Gastrocnemius medialis (tissue), 4 donors: ENCODE measurements at regions of chr19 and their contacts with region 1.

Region 1: DNA sequence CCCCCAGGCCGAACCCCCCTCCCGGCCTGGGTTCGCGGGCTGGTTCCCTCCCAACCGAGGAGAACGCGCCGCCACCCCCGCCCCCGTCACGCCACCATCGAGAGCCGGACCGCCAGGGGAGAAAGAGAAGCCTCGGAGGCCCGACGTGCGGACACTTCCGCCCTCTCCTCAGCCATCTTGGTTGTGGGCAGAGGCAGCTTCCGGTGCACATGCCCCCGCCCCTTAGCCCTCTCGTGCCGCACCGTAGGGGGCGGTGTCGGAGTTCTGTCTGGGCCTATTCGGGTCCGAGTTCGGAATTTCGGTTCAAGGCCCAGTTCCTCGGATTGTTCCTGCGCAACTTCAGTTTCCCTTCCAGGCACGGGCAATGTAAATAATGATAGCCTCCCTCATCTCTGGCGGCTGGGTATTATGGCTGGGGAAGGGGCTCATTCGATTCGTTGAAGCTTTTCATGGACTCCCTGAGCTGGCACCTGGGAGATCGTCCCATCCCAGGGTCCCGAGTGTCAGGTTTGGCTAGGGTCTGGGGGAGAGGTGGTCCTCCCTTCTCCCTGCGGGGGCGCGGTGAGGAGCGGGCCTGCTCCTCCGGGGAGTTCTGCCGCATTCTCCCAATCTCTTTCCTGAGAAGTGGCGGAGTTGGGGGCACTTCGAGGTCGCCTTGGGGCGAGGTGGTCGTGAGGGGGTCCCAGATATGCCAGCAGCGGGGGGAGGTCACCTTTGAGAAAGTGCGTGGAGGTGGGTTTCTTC is at the starts of genes IER2 and STX10:
- DNase-seq: peak; percentile 93 to 94
- ATAC-seq: peak; percentile 67 to 68
- H3K4me3 ChIP-seq: peak within 1 kb of the TSS; percentile 86 to 93 (median 91)
- H3K27ac ChIP-seq: peak within 1 kb of the TSS; percentile 96 to 99 (median 98)
- H3K4me1 ChIP-seq: peaks cover 26 to 32% of the 10 kb centered on the region in 2 donors
- H3K27me3 ChIP-seq: peaks cover 0 to 18% (median 7%) of the 10 kb centered on the region in 3 donors
- CTCF ChIP-seq: peak; percentile 38 to 74 (median 68)
- POLR2A ChIP-seq: peak; percentile 84
- total RNA-seq, gene IER2: 15.4 to 19.1 (median 16.7) TPM
- total RNA-seq, gene STX10: 16.5 to 40.7 (median 33.4) TPM

Region 2: GRCh38 chr19:12890787-12891552 is 259.4 kb before region 1 on chr19 and contains the start of gene GCDH:
- in situ Hi-C with region 1: no loop called
- intact Hi-C with region 1: loop called (anchors 1 kb)
- DNase-seq: peak; percentile 98 to 99
- ATAC-seq: peak; percentile 98 to 99
- H3K4me3 ChIP-seq: peak within 1 kb of the TSS; percentile 79 to 98 (median 84)
- H3K27ac ChIP-seq: peak within 1 kb of the TSS; percentile 83 to 96 (median 88)
- H3K4me1 ChIP-seq: peaks cover 10 to 18% of the 10 kb centered on the region in 2 donors
- H3K27me3 ChIP-seq: peaks cover 0 to 5% (median under 1%) of the 10 kb centered on the region in 3 donors
- CTCF ChIP-seq: peak in 1 of 5 experiments; percentile 34
- POLR2A ChIP-seq: peak; percentile 91 to 94
- total RNA-seq, gene GCDH: 35.6 to 83.8 (median 54.1) TPM

Region 3: DNA sequence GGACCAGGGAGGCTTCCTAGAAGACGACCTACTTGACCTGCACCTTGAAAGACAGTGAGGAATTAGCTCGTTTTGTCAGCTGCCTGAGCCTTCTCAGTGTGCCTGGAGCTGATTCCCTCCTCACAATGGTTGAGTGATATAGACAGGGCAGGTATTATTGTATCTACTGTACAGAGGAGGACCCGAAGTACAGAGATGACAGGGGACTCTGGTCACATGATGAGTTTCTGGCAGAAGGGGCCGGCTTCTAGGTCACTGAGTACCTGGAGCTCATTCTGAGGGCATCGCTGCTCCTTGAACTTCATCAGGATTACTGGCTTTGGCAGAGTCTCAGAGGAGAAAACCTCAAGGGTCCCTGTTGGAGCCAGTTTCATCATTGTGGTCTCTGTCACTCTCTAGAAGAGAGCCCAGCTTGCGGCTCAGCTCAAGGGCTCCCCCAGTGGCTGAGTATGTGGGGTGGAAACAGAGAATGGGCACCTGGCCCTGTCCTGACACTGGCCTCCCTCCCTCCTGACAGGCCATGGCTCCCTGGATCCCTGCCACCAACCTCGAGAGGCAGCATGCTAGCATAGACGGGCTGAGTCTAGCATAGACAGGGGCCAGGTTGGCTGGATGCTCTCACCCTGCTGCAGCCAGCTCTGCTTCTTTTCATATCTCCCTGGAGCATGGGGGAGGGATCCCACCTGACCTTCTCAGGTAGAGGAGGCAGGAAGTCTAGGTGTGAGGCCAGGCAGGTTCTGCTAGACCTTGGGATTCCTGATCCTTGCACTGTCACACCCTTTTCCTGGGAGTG is 116.3 kb before region 1 on chr19:
- in situ Hi-C with region 1: no loop called
- intact Hi-C with region 1: loop called (anchors 5 kb)
- DNase-seq: peak; percentile 74 to 90
- ATAC-seq: peak; percentile 39 to 49
- H3K4me3 ChIP-seq: no peak overlapping the region
- H3K27ac ChIP-seq: peak overlapping the region; percentile 97 to 100 (median 99)
- H3K4me1 ChIP-seq: peaks cover 99% of the 10 kb centered on the region in 2 donors
- H3K27me3 ChIP-seq: no peaks in the 10 kb centered on the region
- CTCF ChIP-seq: peak; percentile 83 to 92 (median 87)
- POLR2A ChIP-seq: no peak

Region 4: DNA sequence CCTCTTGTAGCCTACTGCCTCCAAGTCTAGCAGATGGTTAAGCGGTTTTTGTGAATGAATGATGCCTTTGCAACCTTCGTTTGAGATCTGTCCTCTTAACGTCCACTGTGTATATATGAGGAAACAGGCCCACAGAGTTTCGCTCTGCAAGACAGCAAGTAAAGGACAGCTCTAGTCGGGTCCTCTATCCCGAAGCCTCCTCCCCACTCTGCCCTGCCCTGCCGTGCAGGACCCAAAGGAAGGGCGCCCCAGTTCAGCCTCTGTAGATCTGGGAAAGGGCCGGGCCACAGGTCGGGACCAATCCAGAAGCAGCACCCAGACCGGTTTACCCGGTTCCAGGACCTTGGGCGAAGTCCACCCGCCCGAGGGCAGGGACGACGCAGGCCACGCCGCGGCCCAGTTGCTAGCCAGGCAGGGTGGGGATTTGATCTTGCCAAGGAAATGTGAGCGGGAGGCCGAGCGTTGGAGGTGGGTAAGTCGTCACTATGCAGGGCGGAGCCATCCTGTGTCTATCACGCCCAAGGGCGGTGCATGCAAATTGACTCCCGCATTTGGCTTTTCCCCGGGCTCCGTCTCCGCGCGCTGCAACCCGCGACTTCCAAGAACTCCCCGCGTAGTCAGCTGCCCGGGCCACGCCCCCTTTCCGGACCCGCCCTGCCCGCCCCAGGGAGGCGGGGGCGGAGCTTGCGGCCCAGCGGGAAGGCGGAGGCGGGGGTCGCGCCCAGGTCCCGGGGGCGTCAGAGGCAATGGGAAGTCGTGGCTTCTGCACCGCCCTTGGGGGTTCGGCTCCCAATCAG is 12.4 kb after region 1 on chr19:
- in situ Hi-C with region 1: no loop called
- intact Hi-C with region 1: loop called (anchors 2 kb)
- DNase-seq: peak; percentile 95 to 97
- ATAC-seq: peak; percentile 95 to 96
- H3K4me3 ChIP-seq: peak overlapping the region; percentile 52 to 65 (median 60)
- H3K27ac ChIP-seq: peak overlapping the region; percentile 80 to 89 (median 88)
- H3K4me1 ChIP-seq: peaks cover 14 to 26% of the 10 kb centered on the region in 2 donors
- H3K27me3 ChIP-seq: no peaks in the 10 kb centered on the region
- CTCF ChIP-seq: no peak
- POLR2A ChIP-seq: peak; percentile 38 to 57

Region 5: DNA sequence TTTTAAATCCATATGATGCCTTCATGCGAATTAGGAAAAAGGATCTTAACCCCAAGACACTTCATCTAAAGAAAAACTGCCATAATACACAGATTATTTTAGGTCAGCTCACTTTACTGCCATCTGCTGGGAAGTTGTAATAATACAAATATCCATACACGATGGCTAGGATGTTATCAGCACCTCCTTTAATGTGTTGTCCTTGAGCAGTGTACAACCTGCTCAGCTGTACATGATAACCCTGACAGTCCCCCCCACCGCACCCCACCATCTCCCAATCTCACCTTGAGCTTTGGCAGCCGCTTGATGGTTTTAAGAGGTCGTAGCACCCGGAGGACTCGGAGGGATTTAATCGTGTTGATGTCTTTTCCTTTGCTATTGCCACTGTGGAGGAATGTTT is 112.1 kb after region 1 on chr19:
- in situ Hi-C with region 1: no loop called
- intact Hi-C with region 1: loop called (anchors 2 kb)
- DNase-seq: no peak
- ATAC-seq: peak in 1 of 2 donors; percentile 39
- H3K4me3 ChIP-seq: no peak overlapping the region
- H3K27ac ChIP-seq: no peak overlapping the region
- H3K4me1 ChIP-seq: peaks cover 0 to 9% of the 10 kb centered on the region in 2 donors
- H3K27me3 ChIP-seq: no peaks in the 10 kb centered on the region
- CTCF ChIP-seq: peak; percentile 36 to 64 (median 54)
- POLR2A ChIP-seq: no peak